ENCODE measurements at regions of chr19 and their contacts with region 1.

Region 1: GRCh38 chr19:3125900-3126524 is 9.8 kb upstream of the GNA15 start:
- H3K4me3 ChIP-seq: no peak overlapping the region
- H3K27ac ChIP-seq: no peak overlapping the region
- H3K4me1 ChIP-seq: no peaks in the 10 kb centered on the region
- CTCF ChIP-seq: peak; percentile 98

Region 2: DNA sequence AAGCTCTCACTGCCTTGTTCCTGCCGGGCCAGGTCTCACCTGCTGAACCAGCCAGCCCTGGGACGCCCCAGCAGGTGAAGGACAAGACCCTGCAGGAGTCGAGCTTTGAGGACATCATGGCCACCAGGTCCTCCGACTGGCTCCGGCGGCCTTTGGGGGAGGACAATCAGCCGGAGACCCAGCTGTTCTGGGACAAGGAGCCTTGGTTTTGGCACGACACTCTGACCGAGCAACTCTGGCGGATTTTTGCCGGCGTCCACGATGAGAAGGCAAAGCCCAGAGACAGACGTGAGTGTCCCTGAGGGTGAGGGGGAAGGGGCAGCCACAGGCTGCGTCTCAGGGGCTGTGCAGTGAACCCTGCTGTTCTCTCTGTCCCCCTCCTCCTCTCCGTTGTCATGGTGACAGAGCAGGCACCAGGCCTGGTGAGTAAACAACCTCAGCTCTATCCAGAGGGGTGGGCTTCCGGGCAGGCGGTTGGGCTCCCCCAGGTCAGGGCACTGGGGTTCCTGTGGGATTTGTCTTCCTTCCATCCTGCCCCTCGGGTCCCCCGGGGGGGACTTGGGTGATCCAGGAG is 139.0 kb before region 1 on chr19:
- CTCF ChIA-PET with region 1: no interaction called
- POLR2A ChIA-PET with region 1: no interaction called
- H3K4me3 ChIP-seq: no peak overlapping the region
- H3K27ac ChIP-seq: no peak overlapping the region
- H3K4me1 ChIP-seq: peaks cover 9% of the 10 kb centered on the region
- CTCF ChIP-seq: no peak

Region 3: DNA sequence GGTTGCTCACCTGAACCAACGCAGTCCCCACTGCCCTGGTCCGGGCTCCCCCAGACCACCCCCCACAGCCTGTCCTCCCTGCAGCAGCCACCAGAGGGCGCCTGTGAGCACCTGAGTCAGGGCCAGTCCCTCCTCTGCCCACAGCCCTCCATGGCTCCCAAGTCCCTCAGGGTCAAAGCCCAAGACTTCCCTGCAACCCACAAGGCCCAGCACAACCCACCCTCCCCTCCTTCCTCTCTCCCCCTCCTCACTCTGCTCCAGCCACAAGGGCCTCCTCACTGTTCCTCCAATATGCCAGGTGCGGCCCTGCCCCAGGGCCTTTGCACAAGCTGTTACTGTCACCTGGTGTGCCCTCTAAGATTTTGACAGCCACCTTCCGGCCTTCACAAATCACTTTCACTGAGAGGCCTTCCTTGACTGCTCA is 20.7 kb after region 1 on chr19:
- CTCF ChIA-PET with region 1: interaction called, 17 read pairs
- POLR2A ChIA-PET with region 1: no interaction called
- H3K4me3 ChIP-seq: no peak overlapping the region
- H3K27ac ChIP-seq: no peak overlapping the region
- H3K4me1 ChIP-seq: no peaks in the 10 kb centered on the region
- CTCF ChIP-seq: peak; percentile 82

Region 4: DNA sequence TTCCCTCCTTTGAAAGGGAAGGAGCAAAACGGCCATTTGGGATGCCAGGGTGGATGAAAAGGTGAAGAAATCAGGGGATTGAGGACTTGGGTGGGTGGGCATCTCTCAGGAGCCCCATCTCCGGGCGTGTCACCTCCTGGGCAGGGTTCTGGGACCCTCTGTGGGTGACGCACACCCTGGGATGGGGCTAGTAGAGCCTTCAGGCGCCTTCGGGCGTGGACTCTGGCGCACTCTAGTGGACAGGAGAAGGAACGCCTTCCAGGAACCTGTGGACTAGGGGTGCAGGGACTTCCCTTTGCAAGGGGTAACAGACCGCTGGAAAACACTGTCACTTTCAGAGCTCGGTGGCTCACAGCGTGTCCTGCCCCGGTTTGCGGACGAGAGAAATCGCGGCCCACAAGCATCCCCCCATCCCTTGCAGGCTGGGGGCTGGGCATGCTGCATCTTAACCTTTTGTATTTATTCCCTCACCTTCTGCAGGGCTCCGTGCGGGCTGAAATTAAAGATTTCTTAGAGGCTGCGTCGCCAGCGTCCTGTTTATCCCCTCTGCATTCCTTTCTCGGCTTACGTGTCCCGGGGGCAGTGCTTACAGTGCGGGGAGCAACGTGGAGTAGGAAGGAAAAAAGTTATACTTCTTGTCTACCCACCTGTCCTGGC is 37.3 kb after region 1 on chr19:
- CTCF ChIA-PET with region 1: interaction called, 27 read pairs
- POLR2A ChIA-PET with region 1: no interaction called
- H3K4me3 ChIP-seq: no peak overlapping the region
- H3K27ac ChIP-seq: no peak overlapping the region
- H3K4me1 ChIP-seq: 0 out of 2 replicates have a peak, but pooled peaks cover 4% of the 10 kb centered on the region
- CTCF ChIP-seq: peak; percentile 78

Measured in HEK293 (cell line).